Right cardiac atrium (tissue), 5 donors: ENCODE measurements at regions of chr6 and their contacts with region 1.

Region 1: GRCh38 chr6:167898673-167899311 is 72.1 kb downstream of the AFDN start:
- DNase-seq: no peak
- ATAC-seq: peak; percentile 40 to 56
- H3K4me3 ChIP-seq: no peak overlapping the region
- H3K27ac ChIP-seq: no peak overlapping the region
- H3K4me1 ChIP-seq: no peaks in the 10 kb centered on the region
- H3K27me3 ChIP-seq: no peaks in the 10 kb centered on the region

Region 2: GRCh38 chr6:167485186-167485978 is 413.4 kb before region 1 on chr6:
- intact Hi-C with region 1: loop called (anchors 5 to 10 kb)
- DNase-seq: peak in 1 of 3 donors; percentile 40
- ATAC-seq: peak; percentile 74 to 85
- H3K4me3 ChIP-seq: no peak overlapping the region
- H3K27ac ChIP-seq: no peak overlapping the region
- H3K4me1 ChIP-seq: no peaks in the 10 kb centered on the region
- H3K27me3 ChIP-seq: no peaks in the 10 kb centered on the region

Region 3: DNA sequence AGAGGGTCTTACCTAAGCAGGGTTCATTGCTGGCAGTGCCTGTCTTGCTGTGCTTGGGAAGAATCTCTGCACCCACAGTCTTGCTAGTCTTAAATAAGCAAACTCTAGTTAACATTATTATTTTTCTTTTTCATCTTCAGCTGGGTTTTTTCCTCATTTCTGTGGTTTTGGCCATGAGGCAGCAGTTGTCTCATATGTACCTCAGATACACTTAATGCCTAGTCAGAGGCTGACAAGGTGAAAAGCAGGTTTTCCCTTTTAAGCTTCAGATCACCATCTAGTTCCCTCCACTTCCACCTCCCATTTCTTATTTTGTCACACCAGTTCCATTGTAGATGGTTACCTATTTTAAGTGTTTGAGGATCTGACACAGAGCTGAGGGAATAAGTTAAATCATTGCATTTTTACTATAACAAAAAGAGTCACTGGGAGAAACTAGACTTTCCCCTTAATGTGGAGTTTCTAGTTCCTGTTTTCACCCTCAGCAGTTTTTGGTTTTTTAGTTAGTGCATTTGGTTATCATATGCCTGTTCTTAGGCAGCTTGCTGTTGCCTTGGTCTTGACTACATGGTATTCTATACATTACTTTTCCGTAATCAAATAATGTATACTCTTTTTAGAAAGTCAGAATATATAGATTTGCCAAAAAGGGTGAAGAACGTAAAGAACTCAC is 26.1 kb before region 1 on chr6:
- intact Hi-C with region 1: no loop called
- DNase-seq: no peak
- ATAC-seq: no peak
- H3K4me3 ChIP-seq: no peak overlapping the region
- H3K27ac ChIP-seq: no peak overlapping the region
- H3K4me1 ChIP-seq: no peaks in the 10 kb centered on the region
- H3K27me3 ChIP-seq: no peaks in the 10 kb centered on the region